Mucosa of descending colon (tissue), 3 donors: ENCODE measurements at regions of chr7 and their contacts with region 1.

Region 1: DNA sequence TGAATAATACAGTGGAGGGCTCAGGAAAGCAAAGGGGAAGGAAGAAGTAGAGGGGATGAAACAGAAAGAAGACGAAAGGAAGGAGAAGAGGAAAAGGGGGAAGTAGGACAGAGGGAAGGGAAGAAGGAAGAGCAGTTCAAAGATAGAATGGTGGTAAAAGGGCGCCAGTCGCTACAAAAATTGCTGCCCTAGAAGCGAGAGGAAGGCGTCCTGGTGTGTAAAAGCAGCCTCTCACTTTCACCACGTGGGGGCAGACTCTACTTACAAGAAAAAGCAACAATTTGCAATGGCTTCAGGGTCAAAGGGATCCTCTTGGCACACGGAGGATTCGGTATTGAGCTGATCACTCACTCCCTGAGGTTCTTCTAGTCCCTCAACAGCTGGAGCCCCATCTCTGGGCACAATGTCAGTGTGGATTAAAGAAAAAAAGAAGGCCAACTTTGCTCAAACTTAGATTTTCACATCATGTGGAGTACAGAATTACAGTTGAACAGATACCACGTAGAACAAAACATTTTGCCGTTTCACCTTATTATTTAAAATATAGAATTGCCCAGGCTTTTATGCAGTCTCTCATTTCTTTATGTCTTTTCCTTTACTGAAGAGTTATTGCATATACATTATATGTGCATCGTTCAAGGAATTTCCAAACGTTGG is 31.4 kb upstream of the NPVF start:
- DNase-seq: peak in 2 of 3 donors; percentile 56 to 85
- ATAC-seq: peak; percentile 77
- H3K4me3 ChIP-seq: no peak overlapping the region
- H3K4me1 ChIP-seq: peaks cover 19% of the 10 kb centered on the region
- CTCF ChIP-seq: peak; percentile 66

Region 2: DNA sequence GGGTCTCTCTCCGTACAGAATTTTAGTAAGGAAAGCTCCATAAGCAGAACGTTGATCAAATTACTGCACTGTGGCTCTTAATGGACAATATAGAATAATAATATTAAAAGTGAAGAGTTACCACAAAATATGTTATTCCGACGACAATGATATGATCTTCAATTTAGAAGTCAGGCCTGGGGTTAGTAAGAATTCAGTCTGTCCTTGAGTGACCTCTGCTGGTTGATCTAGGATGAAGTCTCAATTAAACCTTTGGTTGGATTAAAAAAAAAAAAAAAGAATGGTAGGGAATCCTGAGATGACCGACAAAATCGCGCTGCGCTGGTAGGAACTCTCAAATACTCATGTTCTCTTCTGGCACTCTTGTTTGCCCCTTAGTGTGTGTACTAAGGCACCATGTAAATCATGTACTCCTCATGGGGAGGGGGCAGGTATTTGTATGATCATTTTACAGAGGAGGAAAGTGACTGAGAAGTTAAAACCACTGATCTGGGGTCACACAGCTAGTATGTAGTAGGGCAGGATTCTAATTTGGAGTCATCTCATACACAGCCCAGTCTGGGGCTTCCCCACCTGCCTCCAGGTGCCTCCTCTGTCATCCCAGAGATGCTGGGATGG is 129.9 kb after region 1 on chr7:
- intact Hi-C with region 1: loop called (anchors 2 to 5 kb)
- DNase-seq: peak in 1 of 3 donors; percentile 73
- ATAC-seq: peak; percentile 79
- H3K4me3 ChIP-seq: no peak overlapping the region
- H3K4me1 ChIP-seq: no peaks in the 10 kb centered on the region
- CTCF ChIP-seq: no peak

Region 3: DNA sequence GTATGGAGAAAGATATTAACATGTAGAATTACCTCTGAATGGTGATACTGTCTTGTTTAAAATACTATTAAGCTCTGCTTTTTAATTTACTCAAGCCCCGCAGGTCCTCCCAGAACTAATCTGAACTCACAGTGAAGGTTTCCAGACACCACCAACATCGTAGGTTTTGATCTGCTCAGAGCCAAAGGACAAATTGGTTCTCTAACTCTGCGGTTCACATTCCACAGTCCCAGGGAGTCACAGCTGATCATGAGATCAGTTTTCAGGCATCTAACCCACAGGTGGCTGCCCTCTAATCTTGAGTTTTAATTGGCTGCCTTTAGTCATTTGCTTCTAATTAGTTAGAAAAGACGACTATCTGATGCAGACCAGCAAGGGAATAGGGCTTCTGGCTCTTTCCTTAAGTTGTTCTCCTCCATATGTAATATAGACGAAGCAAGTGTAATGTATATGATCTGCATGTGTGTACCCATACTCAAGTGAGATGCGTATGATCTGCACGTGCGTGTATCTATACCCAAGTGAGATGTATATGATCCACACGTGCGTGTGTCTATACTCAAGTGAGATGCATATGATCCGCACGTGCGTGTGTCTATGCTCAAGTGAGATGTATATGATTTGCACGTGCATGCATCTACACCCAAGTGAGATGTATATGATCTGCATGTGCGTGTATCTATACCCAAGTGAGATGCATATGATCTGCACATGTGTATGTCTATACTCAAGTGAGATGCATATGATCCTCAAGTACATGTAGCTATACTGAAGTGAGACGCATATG is 300.1 kb after region 1 on chr7:
- intact Hi-C with region 1: loop called (anchors 5 to 10 kb)
- DNase-seq: no peak
- ATAC-seq: no peak
- H3K4me3 ChIP-seq: no peak overlapping the region
- H3K4me1 ChIP-seq: no peaks in the 10 kb centered on the region
- CTCF ChIP-seq: no peak

Region 4: GRCh38 chr7:25565949-25566348 is 306.2 kb after region 1 on chr7:
- intact Hi-C with region 1: loop called (anchors 5 to 10 kb)
- DNase-seq: peak in 2 of 3 donors; percentile 74 to 84
- ATAC-seq: peak; percentile 50
- H3K4me3 ChIP-seq: no peak overlapping the region
- H3K4me1 ChIP-seq: no peaks in the 10 kb centered on the region
- CTCF ChIP-seq: peak; percentile 97

Region 5: DNA sequence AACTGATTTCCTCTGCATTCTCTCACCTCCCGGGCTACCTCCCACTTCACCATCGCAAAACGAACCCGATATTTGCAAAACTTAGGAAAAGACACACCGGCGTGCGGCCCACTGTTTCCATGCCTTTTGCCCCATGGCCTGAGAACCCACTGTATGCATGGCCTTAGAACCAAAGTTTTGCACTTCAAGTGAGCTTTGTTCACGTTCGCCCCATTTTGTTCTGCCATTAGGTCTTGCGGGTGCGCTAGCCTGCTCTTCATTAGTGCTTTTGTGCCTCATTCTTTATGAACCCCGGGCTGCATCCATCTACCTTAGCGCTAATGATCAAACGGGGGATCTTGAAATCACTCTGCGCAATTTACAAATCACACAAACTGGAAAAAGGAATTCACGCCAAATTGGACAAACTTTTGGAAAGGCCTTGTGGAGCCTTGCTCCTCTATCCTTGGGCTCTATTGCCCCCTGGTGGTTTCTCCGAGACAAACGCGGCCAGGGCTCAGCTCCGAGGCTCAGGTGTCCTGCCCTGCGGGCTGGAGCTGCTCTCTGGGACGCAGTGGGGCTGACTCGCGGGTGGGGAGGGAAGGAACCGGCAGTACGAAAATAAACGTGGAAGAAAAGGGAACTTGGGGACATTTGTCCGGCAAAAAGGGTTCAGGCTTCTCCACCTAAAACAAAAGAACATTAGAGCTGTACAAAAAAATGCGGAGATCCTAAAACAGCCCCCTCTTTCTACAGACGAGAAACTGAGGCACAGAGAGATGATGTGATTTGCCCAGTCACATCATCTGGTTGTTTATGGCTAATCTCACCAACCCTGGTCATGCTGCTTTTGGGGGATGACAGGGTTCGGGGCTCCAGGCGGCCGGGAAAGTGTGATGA is 591.9 kb after region 1 on chr7:
- intact Hi-C with region 1: loop called in 1 of 2 experiments (anchors 10 kb)
- DNase-seq: peak; percentile 85 to 92 (median 91)
- ATAC-seq: peak; percentile 77
- H3K4me3 ChIP-seq: no peak overlapping the region
- H3K4me1 ChIP-seq: peaks cover 27% of the 10 kb centered on the region
- CTCF ChIP-seq: peak; percentile 84